Dorsolateral prefrontal cortex (tissue), 120 donors: ENCODE measurements at regions of chr1 and their contacts with region 1.

Region 1: GRCh38 chr1:225447650-225448089 is 19.8 kb upstream of the LBR start:
- DNase-seq: peak in 5 of 10 donors; percentile 41 to 84 (median 63)
- H3K4me3 ChIP-seq: peak overlapping the region in 52 of 59 donors; percentile 0 to 59 (median 26)
- H3K27ac ChIP-seq: peak overlapping the region; percentile 17 to 97 (median 86)
- H3K27me3 ChIP-seq: peaks cover 0 to 6% (median 0%) of the 10 kb centered on the region in 45 donors
- CTCF ChIP-seq: peak in 3 of 56 donors; percentile 8 to 14 (median 11)

Region 2: DNA sequence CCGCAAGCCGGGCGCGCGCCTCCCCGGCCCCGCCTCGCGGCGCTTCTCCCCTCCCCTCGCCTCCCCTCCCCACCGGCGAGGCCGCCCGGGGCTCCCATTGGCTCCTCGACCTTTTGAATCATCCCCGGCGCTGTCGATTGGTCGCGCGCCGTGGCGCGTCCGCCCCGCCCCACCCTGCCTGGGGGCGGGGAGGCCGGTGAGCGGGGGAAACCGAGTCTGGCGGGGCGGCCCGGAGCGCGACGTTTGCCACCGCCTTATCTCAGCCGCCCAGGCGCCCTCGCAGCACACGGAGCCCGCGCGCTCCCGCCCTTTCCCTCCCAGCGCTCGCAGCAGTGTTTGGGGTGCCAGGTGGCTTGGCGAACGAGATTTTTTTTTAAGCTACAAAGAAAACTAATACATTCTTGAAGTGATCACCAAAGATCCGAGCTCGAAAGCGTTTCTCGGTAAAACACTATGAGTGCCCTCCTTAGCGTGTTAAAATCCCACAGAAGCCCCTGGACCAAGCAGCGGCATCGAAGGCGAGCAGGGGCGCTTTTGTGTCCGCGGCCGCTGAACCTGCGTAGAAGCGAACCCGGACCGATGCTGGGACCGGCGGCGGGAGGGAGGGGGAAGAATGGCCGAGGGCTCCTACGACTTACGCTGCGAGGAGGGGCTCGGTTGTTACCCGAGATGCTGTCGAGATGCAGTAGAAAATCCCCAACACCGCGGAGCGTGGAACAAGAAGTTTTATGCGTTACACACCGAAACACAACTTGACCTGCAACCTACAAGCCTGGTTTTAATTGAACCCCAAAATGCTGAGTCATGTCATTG is 19.4 kb before region 1 on chr1:
- intact Hi-C with region 1: loop called in 1 of 2 experiments (anchors 1 kb)
- DNase-seq: peak; percentile 88 to 98 (median 93)
- H3K4me3 ChIP-seq: peak overlapping the region; percentile 68 to 99 (median 91)
- H3K27ac ChIP-seq: peak overlapping the region; percentile 67 to 97 (median 93)
- H3K27me3 ChIP-seq: no peaks in the 10 kb centered on the region
- CTCF ChIP-seq: peak in 7 of 56 donors; percentile 2 to 28 (median 6)